ENCODE measurements at regions of chr2 and their contacts with region 1.

Region 1: GRCh38 chr2:179332904-179333303 is 68.3 kb upstream of the SESTD1 start:
- DNase-seq: peak; percentile 26
- ATAC-seq: no peak; the same call in 1 of the 2 replicates
- H3K4me3 ChIP-seq: no peak overlapping the region
- H3K27ac ChIP-seq: no peak overlapping the region
- H3K4me1 ChIP-seq: no peaks in the 10 kb centered on the region
- H3K27me3 ChIP-seq: no peaks in the 10 kb centered on the region; the same call in 1 of the 2 replicates
- CTCF ChIP-seq: no peak
- POLR2A ChIP-seq: no peak
- RAD21 ChIP-seq: no peak

Region 2: GRCh38 chr2:178845566-178846457 is 487.1 kb before region 1 on chr2:
- CTCF ChIA-PET with region 1: no interaction called
- POLR2A ChIA-PET with region 1: no interaction called
- dilution Hi-C with region 1: no loop called
- in situ Hi-C with region 1: no loop called
- intact Hi-C with region 1: no loop called
- DNase-seq: peak; percentile 58
- ATAC-seq: no peak
- H3K4me3 ChIP-seq: no peak overlapping the region
- H3K27ac ChIP-seq: no peak overlapping the region
- H3K4me1 ChIP-seq: no peaks in the 10 kb centered on the region; the same call in 1 of the 2 replicates
- H3K27me3 ChIP-seq: no peaks in the 10 kb centered on the region
- CTCF ChIP-seq: no peak
- POLR2A ChIP-seq: no peak
- RAD21 ChIP-seq: no peak

Region 3: DNA sequence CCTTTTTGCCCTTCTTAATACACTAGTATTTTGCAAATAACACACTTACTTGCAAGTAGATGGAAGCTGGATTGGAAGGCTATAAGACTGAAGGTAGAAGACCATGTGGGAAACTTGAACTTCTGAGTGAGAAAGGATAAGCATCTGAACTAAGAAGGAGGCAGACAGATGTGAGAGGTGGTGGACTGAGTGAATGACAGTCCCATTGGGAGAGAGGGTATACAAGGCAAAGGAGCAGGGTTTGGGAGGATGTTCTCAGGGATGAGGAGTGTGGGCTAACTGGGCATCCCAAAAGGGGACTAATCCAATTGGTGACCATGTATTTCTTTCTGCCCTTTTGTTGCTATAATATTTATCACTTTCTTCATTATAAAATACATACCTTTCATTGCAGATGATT is 47.8 kb before region 1 on chr2:
- CTCF ChIA-PET with region 1: no interaction called
- POLR2A ChIA-PET with region 1: no interaction called
- dilution Hi-C with region 1: no loop called
- in situ Hi-C with region 1: no loop called
- intact Hi-C with region 1: loop called (anchors 5 kb)
- DNase-seq: no peak
- ATAC-seq: no peak
- H3K4me3 ChIP-seq: no peak overlapping the region
- H3K27ac ChIP-seq: no peak overlapping the region
- H3K4me1 ChIP-seq: no peaks in the 10 kb centered on the region
- H3K27me3 ChIP-seq: peaks cover 3% of the 10 kb centered on the region
- CTCF ChIP-seq: no peak
- POLR2A ChIP-seq: no peak
- RAD21 ChIP-seq: no peak

Region 4: GRCh38 chr2:179686718-179687342 is 353.9 kb after region 1 on chr2:
- CTCF ChIA-PET with region 1: no interaction called
- POLR2A ChIA-PET with region 1: no interaction called
- dilution Hi-C with region 1: no loop called
- in situ Hi-C with region 1: no loop called
- intact Hi-C with region 1: no loop called
- DNase-seq: peak; percentile 44
- ATAC-seq: peak; percentile 27; the same call in 1 of the 2 replicates
- H3K4me3 ChIP-seq: no peak overlapping the region
- H3K27ac ChIP-seq: no peak overlapping the region
- H3K4me1 ChIP-seq: peaks cover 2% of the 10 kb centered on the region
- H3K27me3 ChIP-seq: no peaks in the 10 kb centered on the region
- CTCF ChIP-seq: no peak
- POLR2A ChIP-seq: no peak
- RAD21 ChIP-seq: no peak